IMR-90 (cell line): ENCODE measurements at regions of chr5 and their contacts with region 1.

Region 1: DNA sequence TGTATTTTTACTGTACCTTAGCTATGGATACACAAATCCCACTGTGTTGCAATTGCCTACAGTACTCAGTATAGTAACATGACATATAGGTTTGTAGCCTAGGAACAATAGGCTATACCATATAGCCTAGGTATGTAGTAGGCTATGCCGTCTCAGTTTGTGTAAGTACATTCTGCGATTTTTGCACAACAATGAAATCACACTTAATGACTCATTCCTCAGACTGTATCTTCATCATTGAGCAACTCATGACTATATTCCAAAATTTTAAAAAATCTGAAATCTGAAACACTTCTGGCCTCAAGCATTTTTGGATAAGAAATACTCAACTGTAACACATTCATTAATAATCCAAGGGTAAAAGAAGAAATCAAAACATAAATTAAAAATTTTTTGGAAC is 666.8 kb upstream of the GRAMD2B start:
- DNase-seq: peak; percentile 3
- ATAC-seq: no peak
- H3K4me3 ChIP-seq: no peak overlapping the region
- H3K27ac ChIP-seq: no peak overlapping the region
- H3K4me1 ChIP-seq: no peaks in the 10 kb centered on the region
- H3K27me3 ChIP-seq: no peaks in the 10 kb centered on the region
- CTCF ChIP-seq: no peak
- POLR2A ChIP-seq: no peak
- RAD21 ChIP-seq: no peak

Region 2: GRCh38 chr5:123997462-123998215 is 1758.8 kb before region 1 on chr5:
- CTCF ChIA-PET with region 1: no interaction called
- POLR2A ChIA-PET with region 1: interaction called, 12 read pairs
- dilution Hi-C with region 1: no loop called
- in situ Hi-C with region 1: no loop called
- intact Hi-C with region 1: no loop called
- DNase-seq: peak; percentile 40
- ATAC-seq: peak; percentile 65
- H3K4me3 ChIP-seq: no peak overlapping the region
- H3K27ac ChIP-seq: no peak overlapping the region
- H3K4me1 ChIP-seq: peaks cover 2% of the 10 kb centered on the region; the same call in 1 of the 2 replicates
- H3K27me3 ChIP-seq: no peaks in the 10 kb centered on the region
- CTCF ChIP-seq: no peak
- POLR2A ChIP-seq: no peak
- RAD21 ChIP-seq: no peak